Naive thymus-derived CD8-positive, alpha-beta T cell (primary cell): ENCODE measurements at regions of chr17 and their contacts with region 1.

Region 1: DNA sequence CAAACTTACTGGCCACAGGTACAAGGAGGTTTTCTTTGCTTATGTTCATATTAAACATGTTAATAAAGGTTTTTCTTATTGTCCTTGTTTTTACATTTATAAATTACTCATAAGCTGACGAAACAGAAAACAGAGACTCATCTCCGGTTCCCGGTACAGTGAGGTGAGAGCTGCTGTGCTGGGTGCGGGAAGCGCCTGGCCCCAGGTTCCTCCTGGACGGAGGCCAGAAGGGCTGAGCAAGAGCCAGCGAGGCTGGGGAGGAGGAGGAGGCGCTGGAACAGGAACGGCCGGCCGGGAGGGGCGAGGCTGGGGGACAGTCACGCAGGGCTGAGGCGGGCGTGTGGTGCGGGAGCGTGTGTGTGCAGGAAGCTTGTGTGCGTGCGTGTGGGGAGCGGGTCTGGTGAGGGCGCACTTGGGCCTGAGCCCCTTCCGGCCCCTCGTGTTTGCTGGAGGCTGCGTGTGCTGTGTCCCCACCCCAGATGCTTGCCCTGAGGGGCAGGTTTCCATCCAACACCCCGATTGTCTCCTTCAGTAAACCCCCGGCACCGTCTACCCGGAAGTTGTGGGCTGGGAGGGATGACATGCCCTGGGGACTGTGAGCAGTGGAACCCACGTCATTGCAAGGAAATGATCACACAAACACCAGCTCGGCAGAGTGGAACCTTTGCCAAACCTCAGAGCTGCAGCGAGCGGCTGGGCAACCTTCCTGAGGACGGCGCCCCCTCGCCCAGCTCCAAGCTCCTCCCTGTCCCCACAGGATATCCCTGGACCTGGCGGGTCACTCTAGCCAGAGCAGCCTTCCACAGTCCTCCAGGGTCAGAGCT is 19.5 kb downstream of the CD7 start:
- DNase-seq: peak; percentile 73 to 99 (median 96)
- ATAC-seq: peak; percentile 67 to 83
- H3K4me3 Mint-ChIP-seq: peak overlapping the region; percentile 91 to 99 (median 96)
- H3K27ac Mint-ChIP-seq: peak overlapping the region; percentile 99 to 100 (median 100)
- H3K4me1 Mint-ChIP-seq: peaks cover 41 to 88% (median 83%) of the 10 kb centered on the region in 4 donors
- H3K27me3 Mint-ChIP-seq: no peaks in the 10 kb centered on the region

Region 2: GRCh38 chr17:82205719-82206508 is 92.0 kb before region 1 on chr17:
- POLR2A ChIA-PET with region 1: interaction called, 14 read pairs
- DNase-seq: peak; percentile 60 to 89 (median 75)
- ATAC-seq: peak; percentile 82 to 89
- H3K4me3 Mint-ChIP-seq: peak overlapping the region; percentile 1 to 78 (median 60)
- H3K27ac Mint-ChIP-seq: peak overlapping the region; percentile 92 to 99 (median 97)
- H3K4me1 Mint-ChIP-seq: peaks cover 12 to 46% (median 35%) of the 10 kb centered on the region in 4 donors
- H3K27me3 Mint-ChIP-seq: no peaks in the 10 kb centered on the region

Region 3: GRCh38 chr17:82236142-82236981 is 61.6 kb before region 1 on chr17:
- POLR2A ChIA-PET with region 1: interaction called, 32 read pairs
- DNase-seq: peak; percentile 50 to 81 (median 69)
- ATAC-seq: peak; percentile 38 to 46
- H3K4me3 Mint-ChIP-seq: peak overlapping the region in 1 of 10 donors; percentile 29
- H3K27ac Mint-ChIP-seq: peak overlapping the region in 5 of 10 donors; percentile 15 to 77 (median 53)
- H3K4me1 Mint-ChIP-seq: peaks cover 16 to 52% (median 40%) of the 10 kb centered on the region in 4 donors
- H3K27me3 Mint-ChIP-seq: peaks cover 0 to 1% (median 0%) of the 10 kb centered on the region in 5 donors

Region 4: DNA sequence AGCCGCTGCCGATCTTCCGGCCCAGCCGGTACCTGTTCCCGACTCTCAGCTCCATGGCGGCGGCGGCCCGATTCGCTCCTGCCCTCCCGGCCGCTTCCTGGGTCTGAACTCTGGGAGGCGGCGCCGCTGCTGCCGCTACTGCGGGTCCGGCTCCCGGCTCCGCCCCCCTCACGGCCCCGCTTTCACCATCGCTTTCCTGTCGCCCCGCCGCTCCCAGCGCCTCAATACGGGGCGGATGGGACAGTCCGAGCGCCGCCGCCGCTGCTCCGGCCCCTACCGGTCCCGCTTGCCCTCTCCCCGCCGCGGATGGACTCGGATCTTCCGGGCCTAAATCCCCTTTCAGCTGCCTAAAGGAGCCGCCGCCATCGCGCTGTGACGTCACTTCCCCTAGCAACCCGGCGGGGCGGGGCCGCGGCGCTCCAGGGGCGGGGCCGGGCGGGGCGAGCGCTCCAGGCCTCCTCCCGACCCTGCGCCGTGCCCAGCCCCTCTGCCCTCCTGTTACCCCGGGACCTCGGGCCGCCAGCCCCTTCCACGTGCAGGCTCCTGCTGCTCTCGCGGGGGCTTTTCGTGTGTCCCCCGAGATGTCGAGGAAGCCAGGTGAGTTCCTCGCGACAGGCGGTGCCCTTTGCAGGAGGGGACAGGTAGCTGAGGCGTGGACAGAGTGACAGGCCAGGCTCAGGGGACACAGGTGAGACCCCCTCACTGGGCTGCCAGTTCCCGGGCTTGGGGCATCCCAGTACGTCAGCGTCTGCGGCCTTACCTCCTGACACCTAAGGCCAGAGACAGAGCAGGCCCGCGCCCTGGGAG is 24.4 kb before region 1 on chr17 and contains the start of gene CSNK1D:
- POLR2A ChIA-PET with region 1: interaction called, 50 read pairs
- DNase-seq: peak; percentile 82 to 98 (median 92)
- ATAC-seq: peak; percentile 74 to 79
- H3K4me3 Mint-ChIP-seq: peak within 1 kb of the TSS; percentile 79 to 99 (median 96)
- H3K27ac Mint-ChIP-seq: peak within 1 kb of the TSS; percentile 93 to 99 (median 99)
- H3K4me1 Mint-ChIP-seq: peaks cover 21 to 49% (median 45%) of the 10 kb centered on the region in 4 donors
- H3K27me3 Mint-ChIP-seq: no peaks in the 10 kb centered on the region
- polyA plus RNA-seq, gene CSNK1D: 47.6 to 72.1 (median 48.6) TPM

Region 5: DNA sequence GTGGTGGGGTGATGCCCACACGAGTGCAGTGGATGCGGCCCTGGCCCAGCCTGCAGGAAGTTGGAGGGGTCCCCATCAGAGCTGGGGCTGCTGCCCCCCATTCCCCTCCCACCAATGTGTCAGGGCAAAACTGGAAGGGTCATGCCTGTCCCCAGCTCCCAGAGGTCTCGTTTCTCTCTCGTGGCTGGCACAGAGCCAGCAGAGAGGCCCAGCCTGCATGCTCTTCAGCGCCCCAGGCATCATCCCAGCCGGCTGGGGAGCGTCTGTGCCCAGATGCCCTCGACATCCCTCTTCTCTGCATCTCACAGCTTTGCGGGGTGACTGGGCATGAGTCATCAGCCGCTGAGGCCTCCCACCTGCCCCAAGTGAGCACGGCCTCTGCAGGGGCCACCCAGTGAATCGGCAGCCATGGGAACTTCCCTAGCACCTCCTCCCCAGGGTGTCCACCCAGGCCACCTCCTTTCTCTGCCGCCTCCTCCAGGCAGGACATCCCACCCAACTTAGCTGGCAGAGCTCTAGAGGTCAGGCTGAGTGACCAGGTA is 14.6 kb before region 1 on chr17:
- POLR2A ChIA-PET with region 1: interaction called, 13 read pairs
- DNase-seq: no peak
- ATAC-seq: no peak
- H3K4me3 Mint-ChIP-seq: no peak overlapping the region
- H3K27ac Mint-ChIP-seq: peak overlapping the region in 2 of 10 donors; percentile 15 to 68
- H3K4me1 Mint-ChIP-seq: peaks cover 10 to 18% (median 15%) of the 10 kb centered on the region in 4 donors
- H3K27me3 Mint-ChIP-seq: no peaks in the 10 kb centered on the region

Region 6: GRCh38 chr17:82315703-82316358 is 17.9 kb after region 1 on chr17:
- POLR2A ChIA-PET with region 1: interaction called, 344 read pairs
- DNase-seq: peak; percentile 44 to 83 (median 64)
- ATAC-seq: peak; percentile 59 to 60
- H3K4me3 Mint-ChIP-seq: peak overlapping the region in 6 of 10 donors; percentile 90 to 98 (median 98)
- H3K27ac Mint-ChIP-seq: peak overlapping the region in 6 of 10 donors; percentile 92 to 98 (median 94)
- H3K4me1 Mint-ChIP-seq: peaks cover 15 to 29% (median 26%) of the 10 kb centered on the region in 4 donors
- H3K27me3 Mint-ChIP-seq: peaks cover 0 to 2% (median 0%) of the 10 kb centered on the region in 5 donors

Region 7: DNA sequence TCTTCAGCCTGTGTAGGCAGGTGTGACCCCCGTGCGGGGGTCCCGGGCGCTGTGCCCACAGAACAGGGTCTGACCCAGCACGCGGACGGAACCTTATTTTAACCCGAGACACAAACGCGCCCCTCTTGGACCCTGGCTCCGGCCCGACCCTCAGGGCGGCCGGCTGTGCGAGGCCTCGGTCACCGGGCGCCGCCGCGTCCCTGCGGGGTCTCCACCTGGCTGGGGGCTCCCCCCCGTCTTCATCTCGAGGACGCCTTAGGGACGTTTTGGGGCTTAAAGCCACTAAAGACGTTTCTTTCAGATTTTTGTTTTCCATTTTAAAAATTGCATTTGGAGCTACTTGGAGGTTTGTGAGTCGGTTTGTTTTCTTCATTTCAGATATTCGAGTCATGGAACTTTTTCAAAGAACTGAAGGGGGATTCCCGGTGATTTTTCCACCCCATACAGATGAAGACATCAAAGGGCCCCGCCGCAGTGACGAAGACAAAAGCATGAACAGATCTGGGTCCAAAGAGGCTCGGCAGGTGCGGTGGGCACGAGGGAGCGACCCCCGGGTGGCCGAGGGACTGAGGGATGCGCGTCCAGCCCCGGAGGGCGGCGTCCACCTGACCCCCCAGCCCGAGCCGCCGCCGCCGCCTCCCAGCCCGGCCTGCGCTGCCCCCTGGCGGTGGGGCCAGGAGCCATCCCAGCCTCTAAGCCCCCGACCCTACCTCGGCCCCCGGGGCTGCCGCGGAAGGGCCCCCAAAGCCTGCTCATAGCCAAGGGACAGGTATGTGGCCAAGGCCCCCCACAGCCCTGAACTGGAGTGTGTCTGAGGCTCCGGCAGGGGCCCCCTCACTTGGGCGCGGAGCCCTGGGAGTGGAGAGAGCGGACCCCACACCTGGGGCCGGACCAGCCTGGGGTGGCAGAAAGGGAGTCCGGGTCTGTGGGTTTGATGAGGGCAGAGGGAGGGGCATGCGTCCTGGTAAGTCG is 23.3 kb after region 1 on chr17:
- POLR2A ChIA-PET with region 1: interaction called, 344 read pairs
- DNase-seq: peak; percentile 54 to 92 (median 82)
- ATAC-seq: peak; percentile 55 to 62
- H3K4me3 Mint-ChIP-seq: peak overlapping the region; percentile 63 to 86 (median 80)
- H3K27ac Mint-ChIP-seq: peak overlapping the region; percentile 49 to 97 (median 90)
- H3K4me1 Mint-ChIP-seq: peaks cover 6 to 21% (median 14%) of the 10 kb centered on the region in 4 donors
- H3K27me3 Mint-ChIP-seq: no peaks in the 10 kb centered on the region